HCT116 (cell line): ENCODE measurements at regions of chr20 and their contacts with region 1.

Region 1: GRCh38 chr20:16573001-16573965 is at the start of gene KIF16B:
- DNase-seq: peak; percentile 78
- ATAC-seq: peak; percentile 78
- H3K4me3 ChIP-seq: peak within 1 kb of the TSS; percentile 72 to 95
- H3K27ac ChIP-seq: peak within 1 kb of the TSS; percentile 69
- H3K4me1 ChIP-seq: peaks cover 12 to 25% of the 10 kb centered on the region in 2 experiments; a peak in 3 of 4 replicates
- H3K27me3 ChIP-seq: no peaks in the 10 kb centered on the region
- CTCF ChIP-seq: no peak
- POLR2A ChIP-seq: peak; percentile 93
- RAD21 ChIP-seq: no peak
- total RNA-seq, gene KIF16B: 7.0 TPM

Region 2: GRCh38 chr20:16125816-16126215 is 447.5 kb before region 1 on chr20:
- CTCF ChIA-PET with region 1: no interaction called
- POLR2A ChIA-PET with region 1: no interaction called
- RAD21 ChIA-PET with region 1: no interaction called
- intact Hi-C with region 1: no loop called
- DNase-seq: no peak
- ATAC-seq: no peak
- H3K4me3 ChIP-seq: no peak overlapping the region
- H3K27ac ChIP-seq: no peak overlapping the region
- H3K4me1 ChIP-seq: no peaks in the 10 kb centered on the region
- H3K27me3 ChIP-seq: no peaks in the 10 kb centered on the region
- CTCF ChIP-seq: no peak
- POLR2A ChIP-seq: no peak
- RAD21 ChIP-seq: no peak

Region 3: DNA sequence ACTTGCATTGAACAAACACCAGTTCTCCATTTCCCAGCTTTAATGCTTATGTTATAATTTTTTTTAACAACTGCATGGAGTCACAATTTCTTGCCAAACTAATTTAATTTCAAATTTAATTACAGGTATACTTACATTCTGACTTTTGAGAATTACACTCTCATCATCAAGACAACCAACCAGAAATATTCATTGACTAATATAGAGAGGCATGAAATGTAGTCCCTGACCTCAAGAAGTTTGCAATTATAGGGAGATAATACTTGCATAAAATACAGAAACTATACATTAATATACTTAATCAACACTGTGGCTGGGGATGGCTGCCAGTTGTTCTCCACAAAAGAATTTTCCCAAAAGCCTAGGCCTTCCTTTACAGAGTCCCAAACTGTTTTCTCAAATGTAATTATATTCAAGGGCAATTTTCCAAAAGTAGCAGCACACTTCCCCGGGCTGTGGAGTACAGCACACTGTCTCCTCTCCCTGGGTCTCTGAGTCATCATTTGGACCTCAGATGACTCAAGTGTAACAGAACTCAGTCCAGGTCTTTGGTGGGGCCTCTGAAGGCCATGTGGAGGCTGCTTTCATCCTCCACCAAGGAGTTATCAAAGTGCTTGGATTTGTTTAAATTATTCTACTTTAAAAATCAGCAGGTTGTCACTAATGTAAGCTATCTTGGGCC is 114.1 kb before region 1 on chr20:
- CTCF ChIA-PET with region 1: no interaction called
- POLR2A ChIA-PET with region 1: no interaction called
- RAD21 ChIA-PET with region 1: no interaction called
- intact Hi-C with region 1: no loop called
- DNase-seq: no peak
- ATAC-seq: peak; percentile 70
- H3K4me3 ChIP-seq: no peak overlapping the region
- H3K27ac ChIP-seq: no peak overlapping the region
- H3K4me1 ChIP-seq: peaks cover 7 to 10% of the 10 kb centered on the region in 2 experiments
- H3K27me3 ChIP-seq: no peaks in the 10 kb centered on the region
- CTCF ChIP-seq: no peak
- POLR2A ChIP-seq: no peak
- RAD21 ChIP-seq: no peak

Region 4: GRCh38 chr20:16530201-16530681 is 43.0 kb before region 1 on chr20:
- CTCF ChIA-PET with region 1: no interaction called
- POLR2A ChIA-PET with region 1: no interaction called
- RAD21 ChIA-PET with region 1: no interaction called
- intact Hi-C with region 1: loop called (anchors 2 kb)
- DNase-seq: peak; percentile 83
- ATAC-seq: peak; percentile 94
- H3K4me3 ChIP-seq: peak overlapping the region; percentile 28 to 55
- H3K27ac ChIP-seq: peak overlapping the region; percentile 35
- H3K4me1 ChIP-seq: peaks cover 41 to 51% of the 10 kb centered on the region in 2 experiments
- H3K27me3 ChIP-seq: no peaks in the 10 kb centered on the region
- CTCF ChIP-seq: peak in 1 of 3 experiments; percentile 8; a peak in 1 of 6 replicates
- POLR2A ChIP-seq: no peak
- RAD21 ChIP-seq: peak; percentile 3; the same call in 1 of the 2 replicates

Region 5: GRCh38 chr20:16596991-16597390 is 23.7 kb after region 1 on chr20:
- CTCF ChIA-PET with region 1: no interaction called
- POLR2A ChIA-PET with region 1: no interaction called
- RAD21 ChIA-PET with region 1: no interaction called
- intact Hi-C with region 1: no loop called
- DNase-seq: no peak
- ATAC-seq: no peak
- H3K4me3 ChIP-seq: no peak overlapping the region
- H3K27ac ChIP-seq: no peak overlapping the region
- H3K4me1 ChIP-seq: 0 out of 4 replicates have a peak, but pooled peaks cover 0 to 3% of the 10 kb centered on the region in 2 experiments
- H3K27me3 ChIP-seq: peaks cover 15% of the 10 kb centered on the region
- CTCF ChIP-seq: no peak
- POLR2A ChIP-seq: no peak
- RAD21 ChIP-seq: no peak

Region 6: DNA sequence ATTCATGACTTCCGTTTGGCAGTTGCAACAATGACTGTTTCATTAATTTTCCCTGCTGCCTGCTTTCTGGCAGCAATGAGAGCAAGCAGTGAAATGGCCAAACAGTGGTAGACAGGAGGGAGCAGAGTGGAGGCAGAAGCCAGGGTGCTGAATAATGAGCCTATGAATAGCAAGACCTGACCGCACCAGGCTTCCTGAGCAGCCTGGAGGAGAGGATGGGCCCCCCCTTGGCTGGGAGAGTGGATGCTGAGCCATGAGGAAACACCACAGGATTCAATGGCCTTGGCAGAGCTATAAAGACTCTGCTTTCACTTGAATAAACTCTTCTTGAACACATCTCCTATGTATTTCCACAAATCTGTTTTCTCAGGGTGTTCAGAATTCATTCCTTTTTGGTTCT is 88.5 kb after region 1 on chr20:
- CTCF ChIA-PET with region 1: no interaction called
- POLR2A ChIA-PET with region 1: no interaction called
- RAD21 ChIA-PET with region 1: no interaction called
- intact Hi-C with region 1: no loop called
- DNase-seq: no peak
- ATAC-seq: no peak
- H3K4me3 ChIP-seq: no peak overlapping the region
- H3K27ac ChIP-seq: no peak overlapping the region
- H3K4me1 ChIP-seq: no peaks in the 10 kb centered on the region
- H3K27me3 ChIP-seq: peaks cover 11% of the 10 kb centered on the region
- CTCF ChIP-seq: no peak
- POLR2A ChIP-seq: no peak
- RAD21 ChIP-seq: no peak

Region 7: DNA sequence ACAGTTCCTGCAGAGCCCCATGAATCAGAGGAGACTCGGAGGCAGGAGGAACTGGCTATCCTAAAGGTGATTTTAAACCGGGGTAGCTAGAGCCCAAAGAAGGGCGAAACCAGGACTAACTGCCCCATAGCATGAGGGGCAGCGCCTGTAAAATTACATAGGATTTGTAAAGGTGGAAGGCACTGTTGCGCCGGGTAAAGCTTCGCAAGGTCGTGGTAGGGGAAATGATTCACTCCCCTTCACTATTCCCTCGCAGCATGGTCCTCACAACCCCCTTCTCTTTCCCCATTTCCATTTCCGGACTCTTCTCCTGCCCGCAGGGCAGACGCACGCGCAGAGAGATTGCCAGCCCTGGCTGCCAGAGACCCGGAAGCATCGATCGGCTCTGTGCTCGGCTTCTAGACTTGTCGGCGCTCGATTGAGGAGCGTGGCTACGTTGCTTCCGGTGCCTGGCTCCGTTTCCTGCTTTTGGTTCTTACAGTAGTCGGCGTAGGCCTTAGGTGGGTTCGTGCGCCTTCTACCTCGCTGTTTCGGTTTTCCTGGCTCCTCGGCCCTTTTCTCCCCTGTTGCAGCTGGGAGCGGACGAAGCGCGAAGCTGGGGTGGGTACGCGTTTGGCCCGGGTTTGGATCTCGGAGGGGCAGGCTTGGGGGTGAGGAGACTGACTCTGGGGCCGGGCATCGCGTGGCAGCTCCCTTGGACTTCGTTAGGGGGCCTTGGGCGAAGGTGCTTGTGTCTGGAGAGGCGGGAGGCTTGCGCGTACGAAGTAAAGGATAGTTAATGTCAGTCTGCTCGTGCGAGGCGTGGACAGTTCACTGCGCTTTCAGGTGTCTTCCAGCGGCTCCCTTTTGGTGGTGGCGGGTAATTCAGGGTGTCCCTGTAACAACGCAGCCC is 156.5 kb after region 1 on chr20 and contains the start of gene SNRPB2:
- CTCF ChIA-PET with region 1: no interaction called
- POLR2A ChIA-PET with region 1: no interaction called
- RAD21 ChIA-PET with region 1: no interaction called
- intact Hi-C with region 1: loop called (anchors 2 kb)
- DNase-seq: peak; percentile 87
- ATAC-seq: peak; percentile 95
- H3K4me3 ChIP-seq: peak within 1 kb of the TSS; percentile 94 to 96
- H3K27ac ChIP-seq: peak within 1 kb of the TSS; percentile 61
- H3K4me1 ChIP-seq: peaks cover 8 to 15% of the 10 kb centered on the region in 2 experiments; a peak in 3 of 4 replicates
- H3K27me3 ChIP-seq: no peaks in the 10 kb centered on the region
- CTCF ChIP-seq: no peak
- POLR2A ChIP-seq: peak; percentile 71
- RAD21 ChIP-seq: no peak
- total RNA-seq, gene SNRPB2: 78.4 TPM